ENCODE measurements at regions of chr14 and their contacts with region 1.

Region 1: GRCh38 chr14:95527387-95528002 is 7.4 kb upstream of the GLRX5 start:
- DNase-seq: no peak
- H3K4me3 Mint-ChIP-seq: no peak overlapping the region
- H3K27ac Mint-ChIP-seq: peak overlapping the region; percentile 84
- H3K4me1 Mint-ChIP-seq: peaks cover 74% of the 10 kb centered on the region
- H3K27me3 Mint-ChIP-seq: no peaks in the 10 kb centered on the region

Region 2: GRCh38 chr14:95265106-95266094 is 262.1 kb before region 1 on chr14:
- intact Hi-C with region 1: loop called (anchors 2 kb)
- DNase-seq: peak; percentile 43
- H3K4me3 Mint-ChIP-seq: no peak overlapping the region
- H3K27ac Mint-ChIP-seq: peak overlapping the region; percentile 2
- H3K4me1 Mint-ChIP-seq: peaks cover 44% of the 10 kb centered on the region
- H3K27me3 Mint-ChIP-seq: peaks cover 2% of the 10 kb centered on the region

Region 3: GRCh38 chr14:95480109-95480886 is 47.2 kb before region 1 on chr14:
- intact Hi-C with region 1: loop called (anchors 2 kb)
- DNase-seq: no peak
- H3K4me3 Mint-ChIP-seq: no peak overlapping the region
- H3K27ac Mint-ChIP-seq: peak overlapping the region; percentile 58
- H3K4me1 Mint-ChIP-seq: peaks cover 19% of the 10 kb centered on the region
- H3K27me3 Mint-ChIP-seq: no peaks in the 10 kb centered on the region

Region 4: DNA sequence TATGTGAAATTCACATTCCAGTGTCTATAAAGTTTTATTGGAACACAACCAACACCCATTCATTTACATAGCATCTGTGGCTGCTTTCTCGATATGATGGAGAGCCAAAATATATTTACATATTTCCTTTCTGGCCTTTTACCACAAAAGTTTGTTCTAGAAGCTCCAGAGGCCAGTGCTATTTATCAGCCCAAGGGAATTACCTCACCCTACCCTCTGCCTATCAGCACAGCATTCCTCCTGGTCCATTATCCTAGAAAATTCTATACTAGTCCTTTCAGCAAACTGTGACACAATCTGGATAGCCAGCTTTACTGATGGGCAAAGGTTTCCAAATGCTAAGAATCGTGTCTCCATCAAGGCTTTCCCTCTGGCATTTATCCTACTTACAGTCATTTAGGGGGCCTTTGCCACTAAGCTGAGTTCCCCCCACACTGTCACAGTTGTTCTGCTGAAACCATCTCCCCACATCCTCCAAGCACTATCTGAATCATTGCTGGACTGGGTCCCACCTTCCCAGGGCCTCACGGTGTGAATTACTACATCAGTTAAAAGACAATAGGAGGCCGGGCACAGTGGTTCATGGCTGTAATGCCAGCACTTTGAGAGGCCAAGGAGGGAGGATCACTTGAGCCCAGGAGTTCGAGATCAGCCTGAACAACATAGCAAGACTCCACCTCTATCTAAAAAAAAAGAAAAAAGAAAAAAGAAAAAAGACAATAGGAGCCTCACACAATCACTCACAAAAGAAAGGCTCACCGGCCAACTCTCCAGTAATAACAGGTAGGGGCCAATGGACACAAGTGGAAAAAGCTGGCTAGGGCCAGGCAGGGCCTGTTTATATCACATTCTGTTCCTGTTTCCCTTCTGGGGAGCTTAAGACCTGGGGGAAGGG is 23.1 kb before region 1 on chr14:
- intact Hi-C with region 1: loop called (anchors 1 kb)
- DNase-seq: no peak
- H3K4me3 Mint-ChIP-seq: no peak overlapping the region
- H3K27ac Mint-ChIP-seq: peak overlapping the region; percentile 82
- H3K4me1 Mint-ChIP-seq: peaks cover 64% of the 10 kb centered on the region
- H3K27me3 Mint-ChIP-seq: no peaks in the 10 kb centered on the region

Region 5: DNA sequence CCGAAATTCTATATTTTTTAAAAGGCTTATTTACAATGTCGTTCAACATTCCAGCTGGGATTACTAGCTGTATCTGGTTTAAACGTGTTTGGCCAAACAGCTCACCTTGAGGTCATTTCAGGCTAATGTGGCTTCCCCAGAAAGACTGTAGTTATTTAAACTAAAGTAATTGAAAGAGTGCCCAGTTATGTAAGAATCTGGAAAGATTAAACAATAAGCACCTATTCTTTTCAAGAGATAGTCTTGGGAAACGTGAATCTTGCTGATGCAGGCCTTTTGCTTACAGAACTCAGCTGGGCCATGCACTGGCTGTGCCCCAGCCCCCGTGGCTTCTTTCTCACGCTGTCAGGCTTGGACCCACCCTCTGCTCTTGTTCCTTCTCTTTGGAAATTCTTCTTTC is 31.7 kb after region 1 on chr14:
- intact Hi-C with region 1: no loop called
- DNase-seq: no peak
- H3K4me3 Mint-ChIP-seq: no peak overlapping the region
- H3K27ac Mint-ChIP-seq: no peak overlapping the region
- H3K4me1 Mint-ChIP-seq: peaks cover 2% of the 10 kb centered on the region
- H3K27me3 Mint-ChIP-seq: peaks cover 9% of the 10 kb centered on the region